PC-9 (cell line): ENCODE measurements at regions of chr13 and their contacts with region 1.

Region 1: GRCh38 chr13:97018029-97018831 is 24.0 kb upstream of the OXGR1 start:
- DNase-seq: peak; percentile 30 to 57
- H3K4me3 ChIP-seq: no peak overlapping the region
- H3K27ac ChIP-seq: no peak overlapping the region
- H3K4me1 ChIP-seq: no peaks in the 10 kb centered on the region; the same call in 1 of the 2 replicates
- H3K27me3 ChIP-seq: no peaks in the 10 kb centered on the region
- CTCF ChIP-seq: peak; percentile 93

Region 2: DNA sequence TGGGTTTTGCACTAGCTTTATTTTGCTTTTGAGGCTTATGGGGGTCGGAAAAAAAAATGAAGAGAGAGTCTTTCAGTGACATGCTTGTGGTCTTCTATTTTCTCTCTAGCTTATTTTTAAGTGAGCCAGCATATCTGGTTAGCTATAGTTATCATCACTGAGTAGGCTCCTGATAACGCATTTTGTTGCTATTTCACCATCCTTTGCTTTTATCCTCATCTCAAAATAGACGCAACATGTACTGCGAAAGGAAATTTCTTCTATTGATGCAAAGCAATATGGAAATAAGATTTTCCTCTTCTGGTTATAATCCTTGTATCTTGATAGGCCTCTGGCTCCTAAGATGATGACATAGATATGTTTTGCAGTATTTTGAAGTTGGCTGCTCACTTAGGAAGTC is 297.8 kb before region 1 on chr13:
- CTCF ChIA-PET with region 1: no interaction called
- POLR2A ChIA-PET with region 1: no interaction called
- intact Hi-C with region 1: no loop called
- DNase-seq: no peak
- H3K4me3 ChIP-seq: no peak overlapping the region
- H3K27ac ChIP-seq: no peak overlapping the region
- H3K4me1 ChIP-seq: no peaks in the 10 kb centered on the region
- H3K27me3 ChIP-seq: peaks cover 9% of the 10 kb centered on the region; the same call in 1 of the 2 replicates
- CTCF ChIP-seq: no peak

Region 3: DNA sequence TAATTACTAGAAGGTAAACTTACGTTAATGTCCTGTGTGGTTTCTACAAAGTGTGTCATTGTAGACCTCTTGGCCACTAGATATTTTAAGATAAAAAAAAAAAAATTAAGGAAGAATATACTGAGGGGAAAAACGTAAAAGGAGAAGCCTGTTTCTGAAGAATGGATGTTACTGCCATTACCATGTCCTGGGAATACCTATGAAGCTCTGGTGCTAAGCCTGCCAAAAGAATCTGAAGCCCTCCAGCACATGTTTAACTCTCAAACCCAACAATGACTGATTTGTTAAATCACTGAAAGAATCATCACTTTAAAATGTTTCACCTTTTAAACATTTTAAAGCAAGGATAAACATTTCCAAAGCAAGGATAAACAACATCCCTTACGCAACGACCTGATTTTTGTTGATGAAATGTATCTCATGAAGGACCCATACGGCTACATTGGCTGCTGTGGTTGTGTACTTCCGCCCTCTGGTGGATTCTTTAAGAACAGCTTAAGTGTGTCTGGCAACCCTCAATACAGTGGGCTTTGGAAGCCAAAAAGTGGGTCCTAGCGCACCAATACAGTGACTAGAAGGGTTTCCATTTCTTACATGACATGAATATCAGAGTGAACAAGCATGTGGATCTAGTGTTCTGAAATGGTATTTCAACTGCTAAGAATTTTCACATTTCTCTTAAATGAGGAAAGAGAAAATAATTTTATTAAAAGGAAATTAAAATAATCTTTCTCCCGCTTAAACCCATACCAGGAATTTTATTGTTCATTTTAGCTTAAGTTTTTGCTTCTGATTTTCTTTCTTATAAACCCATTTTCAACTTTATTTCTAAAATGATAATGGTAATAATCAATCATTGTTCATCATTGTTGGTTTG is 341.2 kb after region 1 on chr13:
- CTCF ChIA-PET with region 1: interaction called, 5 read pairs
- POLR2A ChIA-PET with region 1: no interaction called
- intact Hi-C with region 1: loop called (anchors 1 kb)
- DNase-seq: peak; percentile 43 to 68
- H3K4me3 ChIP-seq: no peak overlapping the region
- H3K27ac ChIP-seq: 0 out of 2 replicates have a peak overlapping the region, but pooled peaks have one; percentile 0
- H3K4me1 ChIP-seq: no peaks in the 10 kb centered on the region
- H3K27me3 ChIP-seq: no peaks in the 10 kb centered on the region
- CTCF ChIP-seq: peak; percentile 92

Region 4: GRCh38 chr13:97574926-97575325 is 556.7 kb after region 1 on chr13:
- CTCF ChIA-PET with region 1: no interaction called
- POLR2A ChIA-PET with region 1: no interaction called
- intact Hi-C with region 1: loop called (anchors 5 kb)
- DNase-seq: peak in 1 of 2 experiments; percentile 19
- H3K4me3 ChIP-seq: no peak overlapping the region
- H3K27ac ChIP-seq: no peak overlapping the region
- H3K4me1 ChIP-seq: no peaks in the 10 kb centered on the region
- H3K27me3 ChIP-seq: no peaks in the 10 kb centered on the region
- CTCF ChIP-seq: peak; percentile 70

Region 5: DNA sequence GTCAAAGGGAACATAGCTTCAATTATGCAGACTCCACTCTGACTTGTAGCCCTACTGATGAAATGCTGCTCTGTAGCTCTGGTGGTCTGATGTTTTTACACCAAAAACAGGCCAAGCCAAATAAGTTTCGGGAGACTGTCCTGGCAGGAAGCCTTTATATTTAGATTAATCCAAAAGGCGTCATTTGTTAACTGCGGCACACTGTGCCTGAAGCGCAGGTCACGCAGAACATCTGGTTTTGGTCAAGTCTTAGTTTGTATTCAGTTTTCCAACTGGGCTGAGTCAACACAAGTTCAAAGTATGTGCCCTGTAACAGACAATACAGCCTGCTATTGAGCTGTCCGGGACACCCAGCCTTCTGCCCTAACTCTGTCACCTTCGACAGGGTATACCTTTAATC is 780.6 kb after region 1 on chr13:
- CTCF ChIA-PET with region 1: no interaction called
- POLR2A ChIA-PET with region 1: no interaction called
- intact Hi-C with region 1: loop called (anchors 2 kb)
- DNase-seq: no peak
- H3K4me3 ChIP-seq: no peak overlapping the region
- H3K27ac ChIP-seq: no peak overlapping the region
- H3K4me1 ChIP-seq: 0 out of 2 replicates have a peak, but pooled peaks cover 6% of the 10 kb centered on the region
- H3K27me3 ChIP-seq: no peaks in the 10 kb centered on the region
- CTCF ChIP-seq: no peak